ENCODE measurements at regions of chr1 and their contacts with region 1.

Region 1: DNA sequence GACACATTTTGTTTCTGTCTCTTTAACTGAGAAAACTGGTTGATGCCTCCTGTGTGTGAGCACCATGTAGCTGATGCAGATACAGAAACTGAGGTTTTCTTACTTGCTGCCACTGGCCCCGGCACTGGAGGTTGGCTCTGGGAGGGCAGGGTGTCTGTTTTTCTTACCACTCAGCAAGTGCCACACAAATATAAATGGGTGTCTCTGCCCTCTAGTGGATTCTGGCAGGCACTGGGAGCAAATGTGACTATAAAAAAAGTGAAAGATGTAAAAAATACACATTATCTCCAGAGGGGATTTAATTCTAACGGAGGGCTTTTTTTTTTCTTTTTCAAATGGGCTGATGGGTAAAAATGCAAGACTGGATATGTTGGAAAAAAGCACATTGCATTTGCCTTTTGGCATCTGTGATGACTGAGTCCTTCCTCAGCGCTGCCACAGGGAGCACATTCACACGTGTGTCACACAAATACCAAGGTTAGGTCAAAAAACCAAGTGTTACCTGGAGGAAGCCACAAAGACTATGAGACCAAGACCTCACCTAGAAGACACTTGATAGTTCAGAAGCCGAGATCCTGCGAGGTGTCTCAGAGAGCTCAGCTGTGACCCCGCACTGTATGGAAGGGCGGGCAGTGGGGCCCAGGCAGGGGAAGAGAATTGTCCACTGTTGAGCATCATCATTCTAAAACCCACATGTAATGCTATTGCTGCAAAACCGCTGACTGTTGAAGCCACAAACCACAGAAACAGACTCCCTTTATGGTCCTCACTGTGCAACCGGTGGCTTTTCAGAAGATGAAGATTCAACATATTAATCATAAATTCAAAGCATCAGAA is 18.9 kb downstream of the PGBD2 start:
- DNase-seq: peak in 7 of 9 donors; percentile 51 to 71 (median 63)
- ATAC-seq: peak; percentile 90
- H3K4me3 ChIP-seq: no peak overlapping the region
- H3K4me3 Mint-ChIP-seq: peak overlapping the region in 5 of 10 donors; percentile 12 to 66 (median 42)
- H3K27ac ChIP-seq: no peak overlapping the region
- H3K27ac Mint-ChIP-seq: peak overlapping the region in 5 of 9 donors; percentile 13 to 69 (median 21)
- H3K4me1 ChIP-seq: peaks cover 0 to 7% of the 10 kb centered on the region in 2 donors
- H3K4me1 Mint-ChIP-seq: peaks cover 7 to 35% (median 8%) of the 10 kb centered on the region in 7 donors
- H3K27me3 ChIP-seq: no peaks in the 10 kb centered on the region
- H3K27me3 Mint-ChIP-seq: peaks cover 0 to 15% (median 5%) of the 10 kb centered on the region in 5 donors

Region 2: GRCh38 chr1:248622570-248623001 is 302.3 kb before region 1 on chr1:
- CTCF ChIA-PET with region 1: interaction called, 8 read pairs
- POLR2A ChIA-PET with region 1: no interaction called
- intact Hi-C with region 1: loop called in 1 of 2 experiments (anchors 1 kb)
- DNase-seq: peak in 6 of 9 donors; percentile 9 to 35 (median 24)
- ATAC-seq: peak; percentile 87
- H3K4me3 ChIP-seq: no peak overlapping the region
- H3K4me3 Mint-ChIP-seq: no peak overlapping the region
- H3K27ac ChIP-seq: no peak overlapping the region
- H3K27ac Mint-ChIP-seq: peak overlapping the region in 1 of 9 donors; percentile 56
- H3K4me1 ChIP-seq: peaks cover 0 to 6% of the 10 kb centered on the region in 2 donors
- H3K4me1 Mint-ChIP-seq: peaks cover 1 to 13% (median 7%) of the 10 kb centered on the region in 7 donors
- H3K27me3 ChIP-seq: no peaks in the 10 kb centered on the region
- H3K27me3 Mint-ChIP-seq: peaks cover 0 to 3% (median 0%) of the 10 kb centered on the region in 5 donors

Region 3: GRCh38 chr1:248696261-248696660 is 228.7 kb before region 1 on chr1:
- CTCF ChIA-PET with region 1: no interaction called
- POLR2A ChIA-PET with region 1: no interaction called
- intact Hi-C with region 1: loop called in 1 of 2 experiments (anchors 1 kb)
- DNase-seq: peak in 3 of 9 donors; percentile 1 to 12 (median 11)
- ATAC-seq: no peak
- H3K4me3 ChIP-seq: no peak overlapping the region
- H3K4me3 Mint-ChIP-seq: no peak overlapping the region
- H3K27ac ChIP-seq: no peak overlapping the region
- H3K27ac Mint-ChIP-seq: no peak overlapping the region
- H3K4me1 ChIP-seq: no peaks in the 10 kb centered on the region
- H3K4me1 Mint-ChIP-seq: peaks cover 0 to 2% (median 0%) of the 10 kb centered on the region in 7 donors
- H3K27me3 ChIP-seq: no peaks in the 10 kb centered on the region
- H3K27me3 Mint-ChIP-seq: peaks cover 0 to 26% (median 9%) of the 10 kb centered on the region in 5 donors

Region 4: DNA sequence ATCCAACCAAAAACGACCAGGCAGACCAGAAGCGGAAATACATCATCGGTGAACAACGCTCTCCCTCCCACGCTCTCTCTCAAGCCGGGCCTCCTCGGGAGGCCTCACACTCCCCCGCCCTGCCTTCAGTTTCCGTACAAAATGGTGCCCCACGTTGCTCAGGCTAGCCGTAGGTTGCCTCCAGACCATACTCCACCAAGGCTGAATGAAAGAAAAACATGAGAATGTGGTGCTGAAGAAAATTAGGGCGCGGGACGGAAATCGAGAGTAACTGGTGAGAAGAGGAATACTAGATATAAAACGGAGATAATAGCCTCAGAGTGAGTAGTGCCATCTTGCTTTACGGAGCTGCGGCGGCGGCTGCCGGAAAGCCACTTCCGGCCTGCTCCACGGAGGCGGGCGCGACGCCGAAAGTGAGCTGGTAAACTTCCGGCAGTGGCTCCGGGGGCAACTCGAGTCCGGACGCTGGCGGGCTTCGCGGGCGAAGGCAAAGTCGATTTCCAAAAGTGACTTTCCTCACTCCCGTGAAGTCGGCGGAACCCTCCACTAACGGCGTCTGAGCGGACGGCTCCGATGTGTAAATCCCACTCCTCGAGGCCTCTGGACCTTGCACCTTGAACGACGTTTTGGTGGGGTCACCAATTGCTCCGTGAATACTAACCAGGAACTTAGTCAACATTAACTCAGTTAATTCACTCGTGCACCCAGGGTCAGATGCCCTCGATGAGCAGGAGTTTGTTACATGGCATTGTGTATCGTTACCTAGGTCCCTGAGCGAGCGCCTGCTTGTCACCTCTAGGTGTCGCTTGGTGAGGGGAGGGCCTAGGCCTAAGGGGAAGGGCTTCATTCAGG is 98.8 kb before region 1 on chr1 and contains the start of gene SH3BP5L:
- CTCF ChIA-PET with region 1: no interaction called
- POLR2A ChIA-PET with region 1: no interaction called
- intact Hi-C with region 1: loop called in 1 of 2 experiments (anchors 1 kb)
- DNase-seq: peak; percentile 78 to 96 (median 95)
- ATAC-seq: peak; percentile 92
- H3K4me3 ChIP-seq: peak within 1 kb of the TSS; percentile 89
- H3K4me3 Mint-ChIP-seq: peak within 1 kb of the TSS; percentile 92 to 99 (median 98)
- H3K27ac ChIP-seq: peak within 1 kb of the TSS; percentile 96
- H3K27ac Mint-ChIP-seq: peak within 1 kb of the TSS; percentile 95 to 100 (median 99)
- H3K4me1 ChIP-seq: peaks cover 37 to 47% of the 10 kb centered on the region in 2 donors
- H3K4me1 Mint-ChIP-seq: peaks cover 43 to 67% (median 52%) of the 10 kb centered on the region in 7 donors
- H3K27me3 ChIP-seq: no peaks in the 10 kb centered on the region
- H3K27me3 Mint-ChIP-seq: peaks cover 0 to 2% (median 0%) of the 10 kb centered on the region in 5 donors
- total RNA-seq, gene SH3BP5L: 22.5 to 51.1 (median 33.3) TPM

Region 5: GRCh38 chr1:248837794-248838356 is 87.0 kb before region 1 on chr1 and contains the start of gene ZNF672:
- CTCF ChIA-PET with region 1: interaction called, 3 read pairs
- POLR2A ChIA-PET with region 1: no interaction called
- intact Hi-C with region 1: loop called in 1 of 2 experiments (anchors 1 kb)
- DNase-seq: peak; percentile 86 to 94 (median 92)
- ATAC-seq: peak; percentile 90
- H3K4me3 ChIP-seq: peak within 1 kb of the TSS; percentile 78
- H3K4me3 Mint-ChIP-seq: peak within 1 kb of the TSS in 2 of 10 donors; percentile 93 to 96
- H3K27ac ChIP-seq: peak within 1 kb of the TSS; percentile 94
- H3K27ac Mint-ChIP-seq: peak within 1 kb of the TSS in 6 of 9 donors; percentile 95 to 99 (median 98)
- H3K4me1 ChIP-seq: peaks cover 13 to 15% of the 10 kb centered on the region in 2 donors
- H3K4me1 Mint-ChIP-seq: peaks cover 19 to 38% (median 31%) of the 10 kb centered on the region in 7 donors
- H3K27me3 ChIP-seq: no peaks in the 10 kb centered on the region
- H3K27me3 Mint-ChIP-seq: peaks cover 0 to 8% (median 0%) of the 10 kb centered on the region in 5 donors
- total RNA-seq, gene ZNF672: 28.7 to 49.8 (median 42.7) TPM